CD4-positive, alpha-beta memory T cell (primary cell): ENCODE measurements at regions of chr12 and their contacts with region 1.

Region 1: GRCh38 chr12:71840231-71840847 is 780 bp downstream of the TBC1D15 start:
- DNase-seq: peak in 3 of 5 donors; percentile 6 to 21 (median 10)
- H3K4me3 ChIP-seq: peak overlapping the region; percentile 78 to 90
- H3K4me3 Mint-ChIP-seq: peak overlapping the region; percentile 90 to 98 (median 96)
- H3K27ac ChIP-seq: peak overlapping the region; percentile 98
- H3K27ac Mint-ChIP-seq: peak overlapping the region; percentile 94 to 99 (median 98)
- H3K4me1 ChIP-seq: peaks cover 53% of the 10 kb centered on the region
- H3K4me1 Mint-ChIP-seq: peaks cover 30 to 49% (median 40%) of the 10 kb centered on the region in 4 donors
- H3K27me3 ChIP-seq: no peaks in the 10 kb centered on the region
- H3K27me3 Mint-ChIP-seq: peaks cover 0 to 1% of the 10 kb centered on the region in 2 donors

Region 2: GRCh38 chr12:70365648-70366518 is 1474.5 kb before region 1 on chr12 and contains the start of gene KCNMB4:
- CTCF ChIA-PET with region 1: no interaction called
- POLR2A ChIA-PET with region 1: no interaction called
- intact Hi-C with region 1: loop called (anchors 5 kb)
- DNase-seq: peak; percentile 59 to 78 (median 63)
- H3K4me3 ChIP-seq: peak within 1 kb of the TSS; percentile 11 to 78
- H3K4me3 Mint-ChIP-seq: peak within 1 kb of the TSS; percentile 92 to 99 (median 94)
- H3K27ac ChIP-seq: peak within 1 kb of the TSS; percentile 3
- H3K27ac Mint-ChIP-seq: peak within 1 kb of the TSS in 6 of 7 donors; percentile 65 to 89 (median 85)
- H3K4me1 ChIP-seq: peaks cover 14% of the 10 kb centered on the region
- H3K4me1 Mint-ChIP-seq: peaks cover 8 to 22% (median 18%) of the 10 kb centered on the region in 4 donors
- H3K27me3 ChIP-seq: peaks cover 8% of the 10 kb centered on the region
- H3K27me3 Mint-ChIP-seq: peaks cover 2 to 4% of the 10 kb centered on the region in 2 donors
- total RNA-seq, gene KCNMB4: 0.67 to 1.1 TPM

Region 3: DNA sequence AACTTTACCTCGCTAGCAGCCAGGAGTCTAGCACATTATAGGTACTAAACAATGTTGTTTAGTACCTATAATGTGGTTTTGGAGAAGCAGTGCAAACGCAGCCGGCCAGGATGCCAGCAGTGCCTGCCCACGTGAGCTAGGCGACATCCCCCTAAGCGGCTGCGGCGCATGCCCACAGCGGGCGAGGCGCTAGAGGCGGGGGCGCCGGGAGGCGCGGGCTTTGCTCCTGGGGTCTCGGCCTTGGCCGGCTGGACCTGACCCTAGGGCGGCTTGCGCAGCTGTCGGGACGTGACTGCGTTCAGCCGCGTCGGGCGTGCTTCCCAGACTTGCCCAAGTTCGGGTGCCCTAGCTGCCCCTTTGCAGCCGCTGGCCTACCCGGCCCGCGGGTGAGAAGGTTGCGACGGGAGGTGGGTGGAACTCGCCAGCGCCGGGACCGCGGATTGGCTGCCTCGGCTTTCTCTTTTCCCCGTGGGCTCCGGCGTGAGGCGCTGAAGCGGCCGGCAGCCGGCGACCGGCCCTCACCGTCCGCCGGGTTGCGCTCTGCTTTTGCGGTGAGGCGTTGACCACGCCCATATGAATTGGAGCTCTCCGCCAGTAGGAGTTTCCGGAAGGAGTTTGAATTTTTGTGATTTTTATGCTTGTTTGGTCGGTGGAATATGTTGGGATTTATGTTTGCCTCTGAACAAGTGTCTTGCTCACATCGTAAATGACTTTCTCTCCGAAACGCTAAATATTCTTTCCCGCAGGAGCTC is 154.2 kb before region 1 on chr12 and contains the start of gene TMEM19:
- CTCF ChIA-PET with region 1: interaction called, 3 read pairs
- POLR2A ChIA-PET with region 1: interaction called, 28 read pairs
- intact Hi-C with region 1: loop called (anchors 1 kb)
- DNase-seq: peak; percentile 82 to 86 (median 84)
- H3K4me3 ChIP-seq: peak within 1 kb of the TSS; percentile 47 to 73
- H3K4me3 Mint-ChIP-seq: peak within 1 kb of the TSS; percentile 92 to 99 (median 96)
- H3K27ac ChIP-seq: peak within 1 kb of the TSS; percentile 72
- H3K27ac Mint-ChIP-seq: peak within 1 kb of the TSS; percentile 80 to 98 (median 95)
- H3K4me1 ChIP-seq: peaks cover 27% of the 10 kb centered on the region
- H3K4me1 Mint-ChIP-seq: peaks cover 10 to 32% (median 17%) of the 10 kb centered on the region in 4 donors
- H3K27me3 ChIP-seq: no peaks in the 10 kb centered on the region
- H3K27me3 Mint-ChIP-seq: no peaks in the 10 kb centered on the region
- total RNA-seq, gene TMEM19: 10.5 to 14.1 TPM

Region 4: DNA sequence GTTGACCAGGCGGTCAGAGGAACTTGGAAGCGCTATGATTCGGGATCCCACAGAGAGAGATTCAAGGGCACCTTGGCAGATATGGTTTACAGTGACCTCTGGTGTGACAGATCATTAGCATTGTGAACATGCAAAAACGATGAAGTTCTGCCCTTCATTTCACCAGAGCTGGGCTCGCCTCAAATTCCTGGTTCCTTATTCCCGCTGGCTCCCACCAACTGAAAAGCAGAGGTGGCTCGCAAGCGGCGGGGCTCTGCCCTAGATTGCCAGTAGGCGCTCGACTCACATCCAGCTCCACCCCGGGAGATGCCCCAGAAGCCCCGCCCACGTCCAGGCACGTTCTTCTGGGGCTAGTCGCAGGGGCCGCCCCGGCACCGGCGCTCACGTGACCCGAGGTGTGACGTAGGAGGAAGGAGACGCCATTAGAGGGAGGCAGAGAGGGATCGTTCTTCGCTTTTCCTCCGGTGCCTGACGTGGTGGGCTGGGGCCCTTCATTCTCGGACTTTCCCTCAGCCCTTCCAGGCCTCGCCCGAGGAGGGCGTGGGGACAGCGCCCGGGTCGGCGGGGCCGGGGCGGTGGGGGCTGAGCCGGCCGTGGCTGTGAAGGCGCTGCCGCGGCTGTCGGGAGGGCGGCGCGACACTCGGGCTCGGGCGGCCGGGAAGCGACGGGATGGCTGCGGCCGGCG is 85.7 kb before region 1 on chr12 and contains the start of gene RAB21:
- CTCF ChIA-PET with region 1: interaction called, 7 read pairs
- POLR2A ChIA-PET with region 1: interaction called, 28 read pairs
- intact Hi-C with region 1: loop called (anchors 1 kb)
- DNase-seq: peak; percentile 97 to 99 (median 98)
- H3K4me3 ChIP-seq: peak within 1 kb of the TSS; percentile 66 to 82
- H3K4me3 Mint-ChIP-seq: peak within 1 kb of the TSS; percentile 93 to 97 (median 95)
- H3K27ac ChIP-seq: peak within 1 kb of the TSS; percentile 86
- H3K27ac Mint-ChIP-seq: peak within 1 kb of the TSS; percentile 97 to 99 (median 97)
- H3K4me1 ChIP-seq: peaks cover 36% of the 10 kb centered on the region
- H3K4me1 Mint-ChIP-seq: peaks cover 24 to 51% (median 39%) of the 10 kb centered on the region in 4 donors
- H3K27me3 ChIP-seq: peaks cover 3% of the 10 kb centered on the region
- H3K27me3 Mint-ChIP-seq: peaks cover 3 to 17% of the 10 kb centered on the region in 2 donors
- total RNA-seq, gene RAB21: 73.6 to 77.2 TPM

Region 5: GRCh38 chr12:71780237-71780822 is 60.0 kb before region 1 on chr12:
- CTCF ChIA-PET with region 1: interaction called, 33 read pairs
- POLR2A ChIA-PET with region 1: interaction called, 5 read pairs
- intact Hi-C with region 1: no loop called
- DNase-seq: peak; percentile 25 to 57 (median 40)
- H3K4me3 ChIP-seq: no peak overlapping the region
- H3K4me3 Mint-ChIP-seq: no peak overlapping the region
- H3K27ac ChIP-seq: no peak overlapping the region
- H3K27ac Mint-ChIP-seq: peak overlapping the region; percentile 17 to 84 (median 45)
- H3K4me1 ChIP-seq: no peaks in the 10 kb centered on the region
- H3K4me1 Mint-ChIP-seq: peaks cover 6 to 10% (median 8%) of the 10 kb centered on the region in 4 donors
- H3K27me3 ChIP-seq: no peaks in the 10 kb centered on the region
- H3K27me3 Mint-ChIP-seq: no peaks in the 10 kb centered on the region